Endothelial cell of umbilical vein (primary cell): ENCODE measurements at regions of chr4 and their contacts with region 1.

Region 1: DNA sequence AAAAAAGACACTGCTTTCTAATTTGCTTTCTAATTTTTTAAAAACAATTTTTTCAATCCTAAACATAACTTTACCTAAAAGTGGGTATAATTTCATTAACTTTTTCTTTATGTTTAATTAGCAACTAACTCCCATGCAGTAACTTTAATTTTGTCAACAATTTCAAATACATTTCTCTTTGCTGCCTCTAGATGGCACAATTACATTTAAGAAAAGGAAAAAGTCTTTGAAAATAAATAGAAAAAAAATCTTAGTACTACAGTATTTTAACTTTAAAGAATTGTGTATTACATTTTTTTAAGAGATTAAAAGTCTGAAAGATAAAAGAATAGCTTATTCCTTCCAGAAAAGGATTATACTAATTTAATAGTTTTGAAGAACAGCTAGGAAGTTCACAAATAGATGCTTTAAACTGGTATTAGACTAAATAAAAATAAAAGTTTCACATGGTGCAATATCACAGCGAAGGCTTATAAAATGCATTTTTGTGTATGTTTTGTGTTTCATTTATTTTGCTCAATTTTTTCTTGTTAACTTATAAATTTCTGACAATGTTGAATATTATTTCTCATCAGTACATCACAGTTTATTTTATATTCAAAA is 105.1 kb downstream of the ADGRA3 start:
- DNase-seq: peak; percentile 36
- H3K4me3 ChIP-seq: no peak overlapping the region
- H3K27ac ChIP-seq: no peak overlapping the region
- H3K4me1 ChIP-seq: no peaks in the 10 kb centered on the region
- H3K27me3 ChIP-seq: no peaks in the 10 kb centered on the region
- CTCF ChIP-seq: peak; percentile 12 to 27
- POLR2A ChIP-seq: no peak

Region 2: GRCh38 chr4:22434895-22435294 is 24.1 kb after region 1 on chr4:
- CTCF ChIA-PET with region 1: interaction called, 18 read pairs
- POLR2A ChIA-PET with region 1: no interaction called
- dilution Hi-C with region 1: no loop called
- intact Hi-C with region 1: loop called (anchors 1 kb)
- DNase-seq: peak; percentile 61
- H3K4me3 ChIP-seq: no peak overlapping the region
- H3K27ac ChIP-seq: no peak overlapping the region
- H3K4me1 ChIP-seq: no peaks in the 10 kb centered on the region
- H3K27me3 ChIP-seq: no peaks in the 10 kb centered on the region
- CTCF ChIP-seq: peak; percentile 21 to 57
- POLR2A ChIP-seq: no peak

Region 3: GRCh38 chr4:22607382-22607781 is 196.6 kb after region 1 on chr4:
- CTCF ChIA-PET with region 1: interaction called, 36 read pairs
- POLR2A ChIA-PET with region 1: no interaction called
- dilution Hi-C with region 1: no loop called
- intact Hi-C with region 1: loop called (anchors 1 kb)
- DNase-seq: peak; percentile 29
- H3K4me3 ChIP-seq: no peak overlapping the region
- H3K27ac ChIP-seq: no peak overlapping the region
- H3K4me1 ChIP-seq: no peaks in the 10 kb centered on the region
- H3K27me3 ChIP-seq: no peaks in the 10 kb centered on the region
- CTCF ChIP-seq: peak; percentile 10 to 54
- POLR2A ChIP-seq: no peak

Region 4: GRCh38 chr4:22688236-22688635 is 277.5 kb after region 1 on chr4:
- CTCF ChIA-PET with region 1: interaction called, 7 read pairs
- POLR2A ChIA-PET with region 1: no interaction called
- dilution Hi-C with region 1: no loop called
- intact Hi-C with region 1: loop called (anchors 1 kb)
- DNase-seq: no peak
- H3K4me3 ChIP-seq: no peak overlapping the region
- H3K27ac ChIP-seq: no peak overlapping the region
- H3K4me1 ChIP-seq: no peaks in the 10 kb centered on the region
- H3K27me3 ChIP-seq: no peaks in the 10 kb centered on the region
- CTCF ChIP-seq: no peak
- POLR2A ChIP-seq: no peak

Region 5: DNA sequence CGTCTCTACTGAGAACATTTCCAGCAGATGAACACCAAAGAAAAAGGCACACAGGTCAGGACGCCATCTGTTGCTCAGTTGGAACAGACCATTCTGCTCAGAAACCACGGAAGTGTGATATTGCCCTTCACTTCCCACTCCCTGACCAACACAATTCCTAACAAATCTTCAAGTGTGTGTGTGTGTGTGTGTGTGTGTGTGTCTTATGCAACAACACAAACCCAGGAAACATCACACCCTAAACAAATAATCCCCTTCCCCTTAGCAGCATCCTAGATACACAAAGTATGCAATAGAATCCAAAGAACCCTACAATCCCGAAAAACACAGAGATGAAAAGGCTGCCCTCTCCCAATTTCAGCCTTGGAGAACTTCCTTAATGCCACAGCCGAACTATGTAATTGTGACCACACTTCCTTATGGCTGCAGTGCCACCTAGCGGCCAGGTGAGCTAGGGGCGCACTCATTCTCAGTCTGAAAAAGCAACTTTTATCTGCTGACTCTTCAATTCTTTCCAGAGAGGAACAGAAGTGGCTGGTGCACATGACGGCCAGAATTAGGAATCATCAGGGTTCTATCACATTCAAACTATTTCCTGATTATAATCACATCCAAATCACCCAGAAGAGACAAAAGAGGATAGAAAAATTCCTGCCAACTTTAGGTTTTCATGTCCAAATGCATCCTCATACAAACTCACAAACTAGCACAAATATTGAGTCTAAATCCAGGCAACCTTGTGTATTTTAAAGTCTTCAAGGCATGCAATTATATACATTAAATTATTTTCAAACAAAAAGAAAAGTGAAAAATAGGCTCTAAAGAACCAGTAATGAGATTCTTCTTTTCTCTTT is 2008.7 kb after region 1 on chr4:
- CTCF ChIA-PET with region 1: no interaction called
- POLR2A ChIA-PET with region 1: no interaction called
- dilution Hi-C with region 1: no loop called
- intact Hi-C with region 1: loop called (anchors 10 kb)
- DNase-seq: peak; percentile 44
- H3K4me3 ChIP-seq: no peak overlapping the region
- H3K27ac ChIP-seq: no peak overlapping the region
- H3K4me1 ChIP-seq: no peaks in the 10 kb centered on the region
- H3K27me3 ChIP-seq: peaks cover 0 to 1% of the 10 kb centered on the region in 2 experiments
- CTCF ChIP-seq: peak; percentile 87 to 94
- POLR2A ChIP-seq: no peak